Right lobe of liver (tissue), 6 donors: ENCODE measurements at regions of chr13 and their contacts with region 1.

Region 1: GRCh38 chr13:85806553-85807175 is 7.4 kb upstream of the SLITRK6 start:
- DNase-seq: no peak
- ATAC-seq: peak; percentile 53 to 70 (median 68)
- H3K4me3 ChIP-seq: no peak overlapping the region
- H3K27ac ChIP-seq: no peak overlapping the region
- H3K4me1 ChIP-seq: no peaks in the 10 kb centered on the region
- H3K27me3 ChIP-seq: no peaks in the 10 kb centered on the region
- CTCF ChIP-seq: peak; percentile 53 to 68 (median 60)
- POLR2A ChIP-seq: no peak

Region 2: GRCh38 chr13:84896128-84896527 is 910.5 kb before region 1 on chr13:
- intact Hi-C with region 1: loop called in 1 of 2 experiments (anchors 10 kb)
- DNase-seq: no peak
- ATAC-seq: peak in 3 of 4 donors; percentile 57 to 60 (median 59)
- H3K4me3 ChIP-seq: no peak overlapping the region
- H3K27ac ChIP-seq: no peak overlapping the region
- H3K4me1 ChIP-seq: no peaks in the 10 kb centered on the region
- H3K27me3 ChIP-seq: no peaks in the 10 kb centered on the region
- CTCF ChIP-seq: peak; percentile 56 to 63 (median 61)
- POLR2A ChIP-seq: no peak

Region 3: GRCh38 chr13:85638815-85639393 is 167.8 kb before region 1 on chr13:
- intact Hi-C with region 1: no loop called
- DNase-seq: peak in 1 of 3 donors; percentile 31
- ATAC-seq: peak in 1 of 4 donors; percentile 16
- H3K4me3 ChIP-seq: no peak overlapping the region
- H3K27ac ChIP-seq: no peak overlapping the region
- H3K4me1 ChIP-seq: no peaks in the 10 kb centered on the region
- H3K27me3 ChIP-seq: no peaks in the 10 kb centered on the region
- CTCF ChIP-seq: no peak
- POLR2A ChIP-seq: no peak

Region 4: GRCh38 chr13:86174622-86175021 is 368.0 kb after region 1 on chr13:
- intact Hi-C with region 1: no loop called
- DNase-seq: no peak
- ATAC-seq: no peak
- H3K4me3 ChIP-seq: no peak overlapping the region
- H3K27ac ChIP-seq: no peak overlapping the region
- H3K4me1 ChIP-seq: no peaks in the 10 kb centered on the region
- H3K27me3 ChIP-seq: no peaks in the 10 kb centered on the region
- CTCF ChIP-seq: no peak
- POLR2A ChIP-seq: no peak